CD8-positive, alpha-beta T cell (primary cell): ENCODE measurements at regions of chr14 and their contacts with region 1.

Region 1: DNA sequence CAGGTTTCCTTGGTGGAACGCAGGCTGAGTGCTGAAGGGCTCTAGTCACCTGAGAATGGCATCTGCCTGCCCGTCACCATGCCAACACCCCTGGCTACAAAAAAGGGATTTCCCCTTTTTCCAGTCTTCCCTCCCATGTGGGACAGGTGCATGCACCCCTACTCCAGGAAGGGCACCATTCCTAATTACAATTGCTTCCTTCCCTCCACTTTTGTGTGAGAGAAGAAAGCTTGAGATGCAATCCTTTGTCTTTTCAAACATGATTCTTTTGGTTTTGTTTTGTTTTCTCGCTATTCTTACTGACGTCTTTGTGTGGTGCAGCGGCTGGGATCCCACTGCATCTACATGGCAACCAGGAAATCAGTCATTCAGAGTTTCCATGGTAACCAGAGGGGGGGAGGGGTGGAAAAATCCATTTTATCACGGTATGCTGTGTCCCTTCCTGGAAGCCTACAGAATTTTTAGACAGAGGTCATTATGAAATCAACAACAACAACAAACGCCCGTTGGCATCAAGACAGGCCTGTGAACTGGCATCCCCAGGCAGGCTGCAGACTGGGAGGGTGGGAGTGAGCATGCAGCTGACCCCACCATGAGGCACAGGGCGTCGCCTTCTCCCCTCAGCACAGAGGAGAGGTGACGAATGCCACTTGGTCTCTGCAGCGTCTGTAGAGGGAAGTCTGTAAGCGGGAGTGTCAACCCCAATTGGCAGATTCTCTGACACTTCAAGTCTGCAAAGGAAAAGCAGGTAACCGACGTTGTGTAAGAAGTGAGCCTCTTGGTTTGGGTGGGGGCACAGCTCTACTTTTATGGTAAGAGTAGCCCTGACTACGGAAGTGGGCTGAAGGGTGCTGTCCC is 13.6 kb upstream of the GNG2 start:
- DNase-seq: peak; percentile 68 to 99 (median 85)
- ATAC-seq: peak; percentile 86
- H3K4me3 ChIP-seq: peak overlapping the region; percentile 47 to 53
- H3K4me3 Mint-ChIP-seq: peak overlapping the region; percentile 91
- H3K27ac ChIP-seq: peak overlapping the region; percentile 97 to 100
- H3K27ac Mint-ChIP-seq: peak overlapping the region; percentile 97
- H3K4me1 ChIP-seq: peaks cover 34% of the 10 kb centered on the region
- H3K4me1 Mint-ChIP-seq: peaks cover 64% of the 10 kb centered on the region
- H3K27me3 ChIP-seq: no peaks in the 10 kb centered on the region
- H3K27me3 Mint-ChIP-seq: no peaks in the 10 kb centered on the region
- CTCF ChIP-seq: no peak

Region 2: GRCh38 chr14:50813544-50813863 is 1033.4 kb before region 1 on chr14:
- CTCF ChIA-PET with region 1: no interaction called
- POLR2A ChIA-PET with region 1: no interaction called
- intact Hi-C with region 1: loop called in 1 of 2 experiments (anchors 5 kb)
- DNase-seq: peak in 3 of 9 experiments; percentile 44 to 76 (median 57)
- ATAC-seq: peak; percentile 85
- H3K4me3 ChIP-seq: peak overlapping the region in 1 of 2 experiments; percentile 9
- H3K4me3 Mint-ChIP-seq: peak overlapping the region; percentile 77
- H3K27ac ChIP-seq: peak overlapping the region in 1 of 2 experiments; percentile 44
- H3K27ac Mint-ChIP-seq: peak overlapping the region; percentile 92
- H3K4me1 ChIP-seq: peaks cover 49% of the 10 kb centered on the region
- H3K4me1 Mint-ChIP-seq: peaks cover 69% of the 10 kb centered on the region
- H3K27me3 ChIP-seq: no peaks in the 10 kb centered on the region
- H3K27me3 Mint-ChIP-seq: no peaks in the 10 kb centered on the region
- CTCF ChIP-seq: no peak

Region 3: GRCh38 chr14:51780006-51780692 is 66.7 kb before region 1 on chr14:
- CTCF ChIA-PET with region 1: interaction called, 6 read pairs
- POLR2A ChIA-PET with region 1: interaction called, 3 read pairs
- intact Hi-C with region 1: loop called in 1 of 2 experiments (anchors 1 kb)
- DNase-seq: peak; percentile 51 to 83 (median 72)
- ATAC-seq: peak; percentile 71
- H3K4me3 ChIP-seq: no peak overlapping the region
- H3K4me3 Mint-ChIP-seq: peak overlapping the region; percentile 15
- H3K27ac ChIP-seq: no peak overlapping the region
- H3K27ac Mint-ChIP-seq: no peak overlapping the region
- H3K4me1 ChIP-seq: peaks cover 4% of the 10 kb centered on the region
- H3K4me1 Mint-ChIP-seq: peaks cover 21% of the 10 kb centered on the region
- H3K27me3 ChIP-seq: no peaks in the 10 kb centered on the region
- H3K27me3 Mint-ChIP-seq: peaks cover 5% of the 10 kb centered on the region
- CTCF ChIP-seq: peak; percentile 92

Region 4: DNA sequence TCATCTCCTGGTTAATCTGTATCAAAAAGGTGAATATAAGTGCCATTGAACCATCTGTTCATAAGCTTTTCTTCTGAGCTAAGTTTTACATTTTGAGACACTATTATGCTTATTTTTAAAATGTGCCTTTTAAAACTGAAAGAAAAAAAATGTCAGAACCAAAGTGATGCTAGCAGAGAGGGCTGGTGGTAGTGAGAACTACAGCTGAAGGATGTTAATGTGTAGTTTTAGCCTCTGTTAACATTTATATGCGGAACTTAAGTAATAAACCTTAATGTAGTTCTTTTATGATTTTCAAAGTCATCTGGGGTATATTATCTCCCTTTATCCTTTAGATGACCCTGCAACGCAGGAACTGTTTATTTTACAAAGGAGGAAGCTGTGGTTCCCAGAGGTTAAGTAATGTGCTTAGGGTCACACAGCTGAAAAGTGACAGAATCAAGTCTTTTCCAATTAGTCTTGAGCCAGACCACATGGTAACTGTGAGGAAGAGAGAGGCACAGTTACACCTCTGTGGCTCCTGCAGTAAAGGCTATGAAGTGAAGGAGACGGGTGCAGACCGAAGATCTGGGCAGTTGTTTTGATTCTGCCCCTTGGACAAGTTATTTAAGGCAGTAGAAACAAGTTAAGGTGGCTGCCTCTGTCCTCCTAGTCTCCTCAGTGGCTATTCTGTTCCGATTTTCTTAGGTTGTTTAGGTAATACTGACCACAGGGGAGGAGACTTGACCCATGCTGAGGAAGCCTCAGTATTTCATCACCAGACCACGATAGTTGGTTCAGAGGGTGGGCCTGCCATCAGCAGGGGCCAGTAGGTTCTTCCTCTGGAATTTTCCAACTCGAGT is 37.4 kb after region 1 on chr14:
- CTCF ChIA-PET with region 1: interaction called, 4 read pairs
- POLR2A ChIA-PET with region 1: interaction called, 12 read pairs
- intact Hi-C with region 1: loop called in 1 of 2 experiments (anchors 5 kb)
- DNase-seq: peak in 1 of 9 experiments; percentile 50
- ATAC-seq: peak; percentile 55
- H3K4me3 ChIP-seq: no peak overlapping the region
- H3K4me3 Mint-ChIP-seq: peak overlapping the region; percentile 61
- H3K27ac ChIP-seq: peak overlapping the region in 1 of 2 experiments; percentile 63
- H3K27ac Mint-ChIP-seq: peak overlapping the region; percentile 79
- H3K4me1 ChIP-seq: peaks cover 51% of the 10 kb centered on the region
- H3K4me1 Mint-ChIP-seq: peaks cover 81% of the 10 kb centered on the region
- H3K27me3 ChIP-seq: no peaks in the 10 kb centered on the region
- H3K27me3 Mint-ChIP-seq: no peaks in the 10 kb centered on the region
- CTCF ChIP-seq: no peak

Region 5: GRCh38 chr14:51979088-51979709 is 132.3 kb after region 1 on chr14:
- CTCF ChIA-PET with region 1: interaction called, 19 read pairs
- POLR2A ChIA-PET with region 1: interaction called, 3 read pairs
- intact Hi-C with region 1: loop called in 1 of 2 experiments (anchors 1 kb)
- DNase-seq: peak; percentile 62 to 90 (median 82)
- ATAC-seq: peak; percentile 86
- H3K4me3 ChIP-seq: no peak overlapping the region
- H3K4me3 Mint-ChIP-seq: no peak overlapping the region
- H3K27ac ChIP-seq: no peak overlapping the region
- H3K27ac Mint-ChIP-seq: no peak overlapping the region
- H3K4me1 ChIP-seq: peaks cover 9% of the 10 kb centered on the region
- H3K4me1 Mint-ChIP-seq: peaks cover 6% of the 10 kb centered on the region
- H3K27me3 ChIP-seq: no peaks in the 10 kb centered on the region
- H3K27me3 Mint-ChIP-seq: no peaks in the 10 kb centered on the region
- CTCF ChIP-seq: peak; percentile 97

Region 6: DNA sequence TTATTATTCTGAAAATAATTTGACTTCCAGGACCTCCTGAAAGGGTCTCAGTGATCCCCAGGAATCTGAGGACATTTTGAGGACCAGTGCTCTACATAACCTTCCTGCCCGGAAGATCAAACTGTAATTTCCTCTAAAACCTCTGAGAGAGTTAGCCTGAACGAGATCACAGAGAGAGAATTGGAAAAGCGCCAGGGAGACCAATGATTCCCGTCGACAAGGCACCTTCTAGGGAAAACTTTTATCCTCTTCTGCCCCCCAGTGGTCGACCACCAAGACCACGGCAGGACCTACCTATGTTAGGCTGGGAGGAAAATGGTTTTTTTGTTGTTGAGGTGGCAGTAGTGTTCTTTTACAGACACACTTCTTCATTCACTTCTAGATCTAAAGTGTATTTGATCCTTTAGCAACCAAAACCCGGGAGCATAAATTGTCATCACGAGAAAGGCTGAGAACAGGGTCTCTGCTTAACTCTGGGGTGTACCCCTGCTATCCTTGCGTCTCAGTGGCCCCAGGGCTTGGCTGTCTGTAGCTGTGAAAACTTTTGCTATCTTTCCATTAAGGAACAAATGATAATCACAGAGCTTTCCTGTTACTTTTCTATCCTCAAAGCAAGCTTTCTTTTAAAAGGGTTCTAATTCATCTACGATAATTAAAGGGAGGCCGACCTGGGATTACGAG is 284.9 kb after region 1 on chr14:
- CTCF ChIA-PET with region 1: no interaction called
- POLR2A ChIA-PET with region 1: no interaction called
- intact Hi-C with region 1: no loop called
- DNase-seq: peak in 8 of 9 experiments; percentile 16 to 81 (median 40)
- ATAC-seq: peak; percentile 23
- H3K4me3 ChIP-seq: no peak overlapping the region
- H3K4me3 Mint-ChIP-seq: no peak overlapping the region
- H3K27ac ChIP-seq: no peak overlapping the region
- H3K27ac Mint-ChIP-seq: no peak overlapping the region
- H3K4me1 ChIP-seq: peaks cover 10% of the 10 kb centered on the region
- H3K4me1 Mint-ChIP-seq: peaks cover 12% of the 10 kb centered on the region
- H3K27me3 ChIP-seq: peaks cover 0 to 3% of the 10 kb centered on the region in 2 experiments
- H3K27me3 Mint-ChIP-seq: no peaks in the 10 kb centered on the region
- CTCF ChIP-seq: peak; percentile 30

Region 7: DNA sequence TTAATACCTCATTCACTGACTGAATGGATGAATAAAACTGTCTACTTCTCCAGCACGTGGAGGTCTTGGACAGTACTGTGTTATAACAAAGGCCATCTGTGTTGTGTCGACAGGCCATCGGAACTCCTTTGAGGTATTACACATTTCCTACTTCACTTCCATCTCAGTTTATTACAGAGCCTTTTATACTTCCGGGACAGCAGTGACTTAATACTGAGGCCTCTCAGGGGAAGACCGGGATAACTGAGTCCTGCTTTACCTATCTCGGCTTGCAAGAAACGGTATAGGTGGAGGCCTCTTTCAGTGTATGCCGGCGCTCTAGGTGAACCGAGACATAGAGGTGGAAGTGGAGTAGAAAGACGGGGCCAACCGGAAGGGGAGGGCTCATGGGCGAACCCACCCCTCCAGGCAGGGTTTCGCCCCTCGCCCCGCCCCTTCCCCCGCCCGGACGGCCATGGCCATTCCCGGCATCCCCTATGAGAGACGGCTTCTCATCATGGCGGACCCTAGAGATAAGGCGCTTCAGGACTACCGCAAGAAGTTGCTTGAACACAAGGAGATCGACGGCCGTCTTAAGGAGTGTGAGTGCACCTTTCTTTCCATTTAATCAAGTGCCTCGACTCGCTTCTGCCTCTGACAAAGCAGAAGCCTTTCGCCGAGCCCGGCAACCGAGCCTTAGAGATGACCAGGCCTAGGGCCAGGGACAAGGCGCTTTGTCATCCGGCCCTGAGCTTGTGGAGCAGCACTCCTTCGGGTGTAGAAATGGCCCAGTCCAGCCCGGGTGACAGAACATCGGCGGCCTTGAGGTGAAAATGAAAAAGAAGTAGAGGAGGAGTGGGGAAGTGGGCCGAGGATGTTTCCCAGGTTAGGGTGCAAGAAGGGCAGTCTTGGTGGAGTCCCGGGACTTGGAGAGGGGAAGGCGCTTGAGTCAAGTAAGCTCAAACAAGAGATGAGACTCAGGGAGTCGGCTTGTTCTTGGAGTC is 860.2 kb after region 1 on chr14 and contains the start of gene PSMC6:
- CTCF ChIA-PET with region 1: no interaction called
- POLR2A ChIA-PET with region 1: no interaction called
- intact Hi-C with region 1: loop called in 1 of 2 experiments (anchors 2 kb)
- DNase-seq: peak; percentile 91 to 96 (median 95)
- ATAC-seq: peak; percentile 98
- H3K4me3 ChIP-seq: peak within 1 kb of the TSS; percentile 69 to 88
- H3K4me3 Mint-ChIP-seq: peak within 1 kb of the TSS; percentile 96
- H3K27ac ChIP-seq: peak within 1 kb of the TSS; percentile 66 to 84
- H3K27ac Mint-ChIP-seq: peak within 1 kb of the TSS; percentile 94
- H3K4me1 ChIP-seq: peaks cover 20% of the 10 kb centered on the region
- H3K4me1 Mint-ChIP-seq: peaks cover 33% of the 10 kb centered on the region
- H3K27me3 ChIP-seq: no peaks in the 10 kb centered on the region
- H3K27me3 Mint-ChIP-seq: no peaks in the 10 kb centered on the region
- CTCF ChIP-seq: no peak
- total RNA-seq, gene PSMC6: 108 to 122 TPM